CD8-positive, alpha-beta T cell (primary cell): ENCODE measurements at regions of chr15 and their contacts with region 1.

Region 1: DNA sequence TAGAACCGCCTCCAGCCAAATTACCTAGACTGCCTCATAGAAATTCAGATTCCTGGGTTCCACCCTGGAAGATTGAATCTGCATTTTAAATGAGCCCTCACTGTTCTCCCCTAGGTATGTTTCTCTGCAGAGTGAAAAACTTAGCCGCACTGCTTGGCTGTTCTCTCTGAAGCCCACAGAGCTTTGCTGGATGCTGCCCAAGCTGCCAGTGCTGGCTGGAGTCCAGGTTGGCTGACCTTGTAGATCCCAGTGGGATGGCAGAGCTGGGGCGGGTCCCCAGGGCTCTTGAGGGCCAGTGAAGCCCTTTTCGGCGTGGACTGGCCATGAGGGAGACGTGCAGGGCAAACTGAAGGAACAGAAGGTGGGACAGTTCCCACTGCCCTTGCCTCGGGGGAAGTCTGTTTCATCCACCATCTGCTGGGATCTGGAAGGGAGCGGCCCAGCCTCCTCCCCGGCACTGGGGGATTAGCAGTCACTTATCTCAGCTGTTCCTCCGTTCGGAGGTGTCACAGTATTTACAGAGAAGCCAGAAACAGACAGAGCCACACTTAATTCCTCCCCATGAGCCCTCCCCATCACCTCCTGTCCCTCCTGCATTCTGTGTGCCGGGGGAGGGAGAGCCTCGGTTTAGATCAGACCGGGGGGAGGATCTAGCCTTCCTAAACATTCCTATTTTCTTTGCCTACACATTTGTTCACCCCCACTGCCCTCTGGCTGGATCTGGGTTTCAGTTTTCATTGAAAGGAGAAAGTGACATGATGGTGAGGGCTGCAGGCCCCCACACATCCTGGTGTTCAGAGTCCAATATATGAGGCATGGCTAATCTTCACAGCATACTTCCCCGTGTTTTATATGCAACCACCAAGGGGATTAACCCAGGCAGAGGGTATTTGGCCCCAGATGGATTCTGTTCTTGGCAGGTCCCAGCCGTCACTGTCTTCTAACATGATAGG is 4.1 kb upstream of the ACTC1 start:
- DNase-seq: no peak
- ATAC-seq: no peak
- H3K4me3 ChIP-seq: no peak overlapping the region
- H3K4me3 Mint-ChIP-seq: no peak overlapping the region
- H3K27ac ChIP-seq: no peak overlapping the region
- H3K27ac Mint-ChIP-seq: no peak overlapping the region
- H3K4me1 ChIP-seq: no peaks in the 10 kb centered on the region
- H3K4me1 Mint-ChIP-seq: no peaks in the 10 kb centered on the region
- H3K27me3 ChIP-seq: peaks cover 0 to 4% of the 10 kb centered on the region in 2 experiments
- H3K27me3 Mint-ChIP-seq: peaks cover 35% of the 10 kb centered on the region
- CTCF ChIP-seq: no peak

Region 2: GRCh38 chr15:34753236-34753894 is 46.1 kb before region 1 on chr15:
- CTCF ChIA-PET with region 1: no interaction called
- POLR2A ChIA-PET with region 1: no interaction called
- intact Hi-C with region 1: no loop called
- DNase-seq: no peak
- ATAC-seq: no peak
- H3K4me3 ChIP-seq: no peak overlapping the region
- H3K4me3 Mint-ChIP-seq: no peak overlapping the region
- H3K27ac ChIP-seq: no peak overlapping the region
- H3K27ac Mint-ChIP-seq: no peak overlapping the region
- H3K4me1 ChIP-seq: no peaks in the 10 kb centered on the region
- H3K4me1 Mint-ChIP-seq: peaks cover 6% of the 10 kb centered on the region
- H3K27me3 ChIP-seq: peaks cover 5 to 11% of the 10 kb centered on the region in 2 experiments
- H3K27me3 Mint-ChIP-seq: peaks cover 59% of the 10 kb centered on the region
- CTCF ChIP-seq: no peak

Region 3: DNA sequence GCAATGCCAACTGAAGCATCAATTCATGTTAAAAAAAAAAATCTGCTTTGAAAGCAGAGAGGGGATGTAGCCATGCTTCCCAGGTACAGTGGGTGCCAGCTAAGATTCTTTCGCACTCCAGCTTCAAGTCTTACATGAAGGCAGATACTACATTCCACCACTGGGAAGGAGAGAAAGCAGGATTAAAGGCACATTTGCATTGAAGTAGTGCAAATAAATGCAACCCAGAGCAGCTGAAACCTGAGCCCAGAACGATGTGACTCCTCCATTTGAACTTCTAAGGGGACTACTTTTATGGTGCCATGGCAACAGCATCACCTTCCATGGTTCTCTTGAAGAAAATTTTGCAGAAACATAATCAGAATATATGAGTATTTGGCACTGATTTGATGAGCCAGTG is 25.5 kb before region 1 on chr15:
- CTCF ChIA-PET with region 1: no interaction called
- POLR2A ChIA-PET with region 1: no interaction called
- intact Hi-C with region 1: no loop called
- DNase-seq: no peak
- ATAC-seq: no peak
- H3K4me3 ChIP-seq: no peak overlapping the region
- H3K4me3 Mint-ChIP-seq: no peak overlapping the region
- H3K27ac ChIP-seq: no peak overlapping the region
- H3K27ac Mint-ChIP-seq: no peak overlapping the region
- H3K4me1 ChIP-seq: no peaks in the 10 kb centered on the region
- H3K4me1 Mint-ChIP-seq: no peaks in the 10 kb centered on the region
- H3K27me3 ChIP-seq: no peaks in the 10 kb centered on the region
- H3K27me3 Mint-ChIP-seq: peaks cover 17% of the 10 kb centered on the region
- CTCF ChIP-seq: no peak

Region 4: GRCh38 chr15:34815836-34816235 is 16.4 kb after region 1 on chr15:
- CTCF ChIA-PET with region 1: no interaction called
- POLR2A ChIA-PET with region 1: no interaction called
- intact Hi-C with region 1: loop called in 1 of 2 experiments (anchors 1 kb)
- DNase-seq: no peak
- ATAC-seq: no peak
- H3K4me3 ChIP-seq: no peak overlapping the region
- H3K4me3 Mint-ChIP-seq: no peak overlapping the region
- H3K27ac ChIP-seq: no peak overlapping the region
- H3K27ac Mint-ChIP-seq: no peak overlapping the region
- H3K4me1 ChIP-seq: no peaks in the 10 kb centered on the region
- H3K4me1 Mint-ChIP-seq: no peaks in the 10 kb centered on the region
- H3K27me3 ChIP-seq: peaks cover 0 to 4% of the 10 kb centered on the region in 2 experiments
- H3K27me3 Mint-ChIP-seq: peaks cover 30% of the 10 kb centered on the region
- CTCF ChIP-seq: no peak

Region 5: DNA sequence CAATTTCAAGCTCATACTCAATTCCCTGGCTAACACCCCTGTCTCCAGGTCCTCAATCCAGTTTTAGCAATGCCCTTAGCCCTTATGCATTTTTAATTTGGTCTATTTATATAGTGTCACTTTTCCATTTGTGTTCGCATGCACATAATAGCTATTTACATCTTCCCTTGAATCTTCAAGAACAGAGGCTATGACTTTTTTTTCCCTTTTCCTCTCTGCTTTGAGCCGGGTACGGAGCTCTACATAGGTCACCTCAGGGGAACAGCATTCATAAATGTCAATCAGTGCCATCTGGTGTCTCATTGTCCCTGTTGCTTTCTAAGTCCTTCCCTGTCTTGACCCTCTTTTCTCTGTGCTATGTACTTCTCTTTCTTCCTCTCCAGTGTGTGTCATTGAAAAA is 22.4 kb after region 1 on chr15:
- CTCF ChIA-PET with region 1: no interaction called
- POLR2A ChIA-PET with region 1: no interaction called
- intact Hi-C with region 1: loop called in 1 of 2 experiments (anchors 2 kb)
- DNase-seq: no peak
- ATAC-seq: no peak
- H3K4me3 ChIP-seq: no peak overlapping the region
- H3K4me3 Mint-ChIP-seq: no peak overlapping the region
- H3K27ac ChIP-seq: no peak overlapping the region
- H3K27ac Mint-ChIP-seq: no peak overlapping the region
- H3K4me1 ChIP-seq: no peaks in the 10 kb centered on the region
- H3K4me1 Mint-ChIP-seq: no peaks in the 10 kb centered on the region
- H3K27me3 ChIP-seq: peaks cover 0 to 2% of the 10 kb centered on the region in 2 experiments
- H3K27me3 Mint-ChIP-seq: peaks cover 32% of the 10 kb centered on the region
- CTCF ChIP-seq: no peak

Region 6: GRCh38 chr15:34850121-34850520 is 50.7 kb after region 1 on chr15:
- CTCF ChIA-PET with region 1: no interaction called
- POLR2A ChIA-PET with region 1: no interaction called
- intact Hi-C with region 1: no loop called
- DNase-seq: no peak
- ATAC-seq: no peak
- H3K4me3 ChIP-seq: no peak overlapping the region
- H3K4me3 Mint-ChIP-seq: no peak overlapping the region
- H3K27ac ChIP-seq: no peak overlapping the region
- H3K27ac Mint-ChIP-seq: no peak overlapping the region
- H3K4me1 ChIP-seq: no peaks in the 10 kb centered on the region
- H3K4me1 Mint-ChIP-seq: no peaks in the 10 kb centered on the region
- H3K27me3 ChIP-seq: no peaks in the 10 kb centered on the region
- H3K27me3 Mint-ChIP-seq: no peaks in the 10 kb centered on the region
- CTCF ChIP-seq: no peak